Posterior vena cava (tissue), 2 donors: ENCODE measurements at regions of chr1 and their contacts with region 1.

Region 1: DNA sequence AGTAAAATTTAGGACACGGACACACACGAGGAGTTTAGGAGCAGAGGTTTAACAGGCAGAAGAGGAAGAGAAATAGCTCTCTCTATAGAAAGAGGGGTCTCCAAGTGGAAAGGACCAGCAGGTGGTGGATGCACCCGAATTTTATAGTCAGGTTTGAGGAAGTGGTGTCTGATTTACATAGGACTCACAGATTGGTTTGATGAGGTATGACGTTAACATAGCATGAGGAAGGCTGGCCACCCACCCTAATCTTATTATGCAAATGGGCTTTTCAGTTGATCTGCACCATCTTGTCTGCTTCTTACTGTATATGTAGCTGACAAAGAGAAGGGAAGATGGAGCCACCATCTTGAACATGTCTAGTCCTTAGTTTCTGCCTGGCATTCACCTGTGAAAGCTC is 52.5 kb upstream of the RGS2 start:
- DNase-seq: no peak

Region 2: GRCh38 chr1:192887426-192887825 is 131.1 kb after region 1 on chr1:
- intact Hi-C with region 1: no loop called
- DNase-seq: no peak

Region 3: DNA sequence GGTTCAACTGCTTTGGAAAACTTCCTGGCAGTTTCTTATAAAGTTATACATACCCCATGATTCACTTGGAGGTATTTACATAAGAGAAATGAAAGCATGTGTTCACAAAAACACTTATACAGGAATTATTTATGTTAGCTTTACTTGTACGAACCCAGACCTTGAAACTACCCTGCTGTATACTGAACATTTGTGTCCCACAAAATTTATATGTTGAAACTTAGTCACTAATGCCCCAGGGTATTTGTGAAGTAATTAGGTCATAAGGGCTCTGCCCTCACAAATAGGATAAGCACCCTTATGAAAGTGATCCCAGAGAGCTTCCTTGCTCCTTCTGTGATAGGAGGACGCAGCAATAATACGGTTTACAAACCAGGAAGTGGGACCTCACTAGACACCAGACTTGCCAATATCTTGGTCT is 472.8 kb after region 1 on chr1:
- intact Hi-C with region 1: no loop called
- DNase-seq: no peak

Region 4: GRCh38 chr1:193479187-193479586 is 722.9 kb after region 1 on chr1:
- intact Hi-C with region 1: loop called in 1 of 2 experiments (anchors 5 kb)
- DNase-seq: no peak